PC-3 (cell line): ENCODE measurements at regions of chr15 and their contacts with region 1.

Region 1: DNA sequence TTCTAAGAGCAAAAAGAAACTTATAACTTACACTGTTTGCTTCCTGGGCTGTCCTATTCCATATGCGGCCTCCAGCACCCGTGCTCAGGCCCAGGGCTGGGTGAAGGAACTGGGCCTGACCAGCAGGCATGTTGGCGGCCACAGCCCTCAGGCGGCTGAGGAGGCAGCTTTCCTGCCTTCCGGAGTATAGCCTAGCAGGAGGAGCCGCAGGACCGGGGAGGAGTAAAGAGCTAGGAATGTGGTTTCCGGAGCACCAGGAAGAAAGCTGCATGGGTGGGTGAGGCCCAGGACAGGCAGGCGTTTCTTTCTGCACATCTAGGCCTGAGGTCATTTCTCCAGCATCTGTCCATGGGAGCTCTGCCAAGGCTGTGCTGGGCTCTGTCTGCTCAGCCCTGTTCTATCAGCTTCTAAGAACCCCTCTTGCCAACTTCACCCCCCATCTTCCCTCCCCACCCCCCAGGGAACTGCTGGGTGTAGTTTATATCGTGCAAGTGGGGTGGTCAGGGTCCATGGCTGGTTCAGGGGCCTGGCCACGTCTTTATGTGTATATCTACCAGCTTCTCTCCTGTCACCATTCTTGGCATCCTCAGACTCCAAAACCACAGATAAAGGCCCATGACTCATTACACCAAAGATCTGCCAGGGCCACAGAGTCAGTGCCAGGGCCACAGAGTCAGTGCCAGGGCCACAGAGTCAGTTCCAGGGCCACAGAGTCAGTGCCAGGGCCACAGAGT is 7.8 kb upstream of the KIF7 start:
- DNase-seq: peak; percentile 93
- ATAC-seq: peak; percentile 91
- H3K4me3 ChIP-seq: peak overlapping the region; percentile 44
- H3K27ac ChIP-seq: peak overlapping the region; percentile 94
- H3K4me1 ChIP-seq: peaks cover 33% of the 10 kb centered on the region
- H3K27me3 ChIP-seq: no peaks in the 10 kb centered on the region
- CTCF ChIP-seq: no peak

Region 2: GRCh38 chr15:89680282-89680873 is 17.3 kb after region 1 on chr15:
- CTCF ChIA-PET with region 1: no interaction called
- POLR2A ChIA-PET with region 1: no interaction called
- intact Hi-C with region 1: loop called (anchors 1 kb)
- DNase-seq: peak; percentile 90
- ATAC-seq: peak; percentile 89
- H3K4me3 ChIP-seq: no peak overlapping the region
- H3K27ac ChIP-seq: peak overlapping the region; percentile 54
- H3K4me1 ChIP-seq: peaks cover 24% of the 10 kb centered on the region
- H3K27me3 ChIP-seq: no peaks in the 10 kb centered on the region
- CTCF ChIP-seq: no peak

Region 3: GRCh38 chr15:89690276-89691218 is 27.5 kb after region 1 on chr15 and contains the starts of genes PEX11A and WDR93:
- CTCF ChIA-PET with region 1: no interaction called
- POLR2A ChIA-PET with region 1: interaction called, 8 read pairs
- intact Hi-C with region 1: loop called (anchors 2 kb)
- DNase-seq: peak; percentile 82
- ATAC-seq: peak; percentile 94
- H3K4me3 ChIP-seq: peak within 1 kb of the TSS; percentile 94
- H3K27ac ChIP-seq: no peak within 1 kb of the TSS
- H3K4me1 ChIP-seq: peaks cover 12% of the 10 kb centered on the region
- H3K27me3 ChIP-seq: no peaks in the 10 kb centered on the region
- CTCF ChIP-seq: no peak
- total RNA-seq, gene PEX11A: 7.8 and 9.7 TPM in 2 replicates
- total RNA-seq, gene WDR93: 0.22 TPM in 1 of 2 replicates, not detected in the other